CD14-positive monocyte (primary cell): ENCODE measurements at regions of chr9 and their contacts with region 1.

Region 1: DNA sequence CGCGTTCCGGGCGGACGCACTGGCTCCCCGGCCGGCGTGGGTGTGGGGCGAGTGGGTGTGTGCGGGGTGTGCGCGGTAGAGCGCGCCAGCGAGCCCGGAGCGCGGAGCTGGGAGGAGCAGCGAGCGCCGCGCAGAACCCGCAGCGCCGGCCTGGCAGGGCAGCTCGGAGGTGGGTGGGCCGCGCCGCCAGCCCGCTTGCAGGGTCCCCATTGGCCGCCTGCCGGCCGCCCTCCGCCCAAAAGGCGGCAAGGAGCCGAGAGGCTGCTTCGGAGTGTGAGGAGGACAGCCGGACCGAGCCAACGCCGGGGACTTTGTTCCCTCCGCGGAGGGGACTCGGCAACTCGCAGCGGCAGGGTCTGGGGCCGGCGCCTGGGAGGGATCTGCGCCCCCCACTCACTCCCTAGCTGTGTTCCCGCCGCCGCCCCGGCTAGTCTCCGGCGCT is at the start of gene DAPK1:
- DNase-seq: peak; percentile 65 to 75 (median 67)
- H3K4me3 ChIP-seq: peak within 1 kb of the TSS; percentile 73 to 91 (median 84)
- H3K4me3 Mint-ChIP-seq: peak within 1 kb of the TSS; percentile 97 to 100
- H3K27ac ChIP-seq: peak within 1 kb of the TSS; percentile 69 to 90
- H3K27ac Mint-ChIP-seq: peak within 1 kb of the TSS; percentile 90 to 96 (median 91)
- H3K4me1 ChIP-seq: peaks cover 59 to 75% of the 10 kb centered on the region in 2 donors
- H3K4me1 Mint-ChIP-seq: peaks cover 73% of the 10 kb centered on the region
- H3K27me3 ChIP-seq: no peaks in the 10 kb centered on the region
- H3K27me3 Mint-ChIP-seq: peaks cover 5 to 6% (median 6%) of the 10 kb centered on the region in 3 donors
- CTCF ChIP-seq: peak; percentile 17
- polyA plus RNA-seq, gene DAPK1: 24.1 to 102 (median 44.4) TPM

Region 2: DNA sequence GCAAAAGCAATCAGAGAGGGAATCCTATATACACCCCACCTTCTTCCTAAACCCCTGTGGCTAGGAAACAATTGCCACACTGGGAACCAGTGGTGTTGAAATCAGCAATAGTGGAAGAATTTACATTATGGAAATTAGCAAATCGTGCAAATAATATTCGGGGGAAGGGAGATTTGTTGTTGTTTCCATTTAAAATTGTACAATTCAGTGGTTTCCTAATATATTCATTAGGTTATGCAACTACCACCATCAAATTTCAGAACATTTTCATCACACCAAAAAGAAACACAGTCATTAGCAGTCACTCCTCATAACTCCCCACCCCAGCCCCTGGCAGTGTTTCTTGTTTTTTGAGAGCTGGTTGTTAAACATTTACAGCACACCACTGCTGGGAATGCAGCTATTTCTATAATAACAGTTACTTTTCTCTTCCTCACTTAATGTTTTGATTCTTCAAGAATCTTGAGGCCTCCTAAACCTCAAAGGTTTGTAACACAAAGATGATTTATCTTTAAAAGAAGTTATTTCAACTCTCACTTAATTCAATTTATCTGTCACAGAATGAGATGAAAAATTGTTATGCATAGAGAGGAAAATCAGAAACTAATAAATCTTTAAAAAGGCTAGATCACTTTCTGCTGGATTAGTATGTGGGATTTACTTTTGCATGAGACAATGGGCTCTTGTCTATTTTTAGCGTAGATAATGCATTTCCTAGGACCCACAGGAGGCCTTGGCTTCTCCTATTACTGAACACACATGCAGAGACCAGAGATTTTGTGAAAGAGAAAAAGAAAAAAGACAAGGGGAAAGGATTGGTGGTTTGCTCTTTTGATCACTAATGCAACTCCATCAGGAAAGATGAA is 91.7 kb before region 1 on chr9:
- intact Hi-C with region 1: loop called in 1 of 2 experiments (anchors 5 kb)
- DNase-seq: peak; percentile 77 to 91 (median 86)
- H3K4me3 ChIP-seq: peak overlapping the region in 1 of 3 experiments; percentile 35
- H3K4me3 Mint-ChIP-seq: peak overlapping the region in 1 of 2 donors; percentile 54
- H3K27ac ChIP-seq: peak overlapping the region; percentile 49 to 93
- H3K27ac Mint-ChIP-seq: peak overlapping the region; percentile 91 to 97 (median 94)
- H3K4me1 ChIP-seq: peaks cover 30 to 36% of the 10 kb centered on the region in 2 donors
- H3K4me1 Mint-ChIP-seq: peaks cover 40% of the 10 kb centered on the region
- H3K27me3 ChIP-seq: no peaks in the 10 kb centered on the region
- H3K27me3 Mint-ChIP-seq: peaks cover 1 to 3% (median 2%) of the 10 kb centered on the region in 3 donors
- CTCF ChIP-seq: no peak

Region 3: DNA sequence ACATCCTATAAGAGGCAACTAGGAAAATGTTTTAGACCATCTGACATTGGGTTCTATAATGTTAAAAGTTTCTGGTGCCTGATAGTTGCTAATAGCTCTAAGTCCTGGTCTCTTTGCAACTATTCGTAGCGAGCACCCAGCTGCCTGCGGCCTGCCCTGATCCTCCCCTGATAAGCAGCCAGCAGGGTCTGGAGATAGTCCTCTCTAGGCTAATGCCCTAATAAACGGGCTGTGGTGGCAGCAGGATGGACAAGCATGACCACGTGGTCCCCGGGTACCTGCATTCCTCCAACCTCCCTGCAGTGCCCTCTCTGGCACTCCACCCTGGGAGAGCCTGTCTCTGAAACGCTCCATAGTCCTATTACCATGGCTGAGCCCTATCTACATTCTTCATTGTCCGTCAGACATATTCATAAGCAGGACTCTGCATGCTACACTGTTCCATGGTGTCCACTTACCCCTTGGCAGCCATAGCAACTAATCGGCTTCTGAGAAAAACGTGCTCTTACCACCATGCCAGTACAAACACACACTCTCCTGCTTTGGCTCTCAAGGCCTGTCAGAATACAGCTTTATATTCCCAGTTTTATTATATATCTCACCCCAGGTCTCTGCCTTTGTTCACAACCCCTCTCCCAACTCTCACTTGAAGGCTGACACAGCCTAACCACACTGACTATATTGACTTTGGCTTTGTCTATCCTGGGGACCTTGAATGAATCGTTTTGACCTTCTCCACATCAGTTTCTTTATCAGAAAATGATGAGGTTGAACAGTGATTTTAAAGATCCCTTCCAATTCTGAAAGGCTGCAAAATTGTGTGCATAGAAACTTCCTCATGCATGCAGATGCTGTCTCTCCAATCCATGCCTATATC is 49.8 kb before region 1 on chr9:
- intact Hi-C with region 1: no loop called
- DNase-seq: no peak
- H3K4me3 ChIP-seq: no peak overlapping the region
- H3K4me3 Mint-ChIP-seq: no peak overlapping the region
- H3K27ac ChIP-seq: no peak overlapping the region
- H3K27ac Mint-ChIP-seq: no peak overlapping the region
- H3K4me1 ChIP-seq: peaks cover 6 to 9% of the 10 kb centered on the region in 2 donors
- H3K4me1 Mint-ChIP-seq: peaks cover 11% of the 10 kb centered on the region
- H3K27me3 ChIP-seq: no peaks in the 10 kb centered on the region
- H3K27me3 Mint-ChIP-seq: peaks cover 0 to 2% (median 0%) of the 10 kb centered on the region in 3 donors
- CTCF ChIP-seq: no peak

Region 4: DNA sequence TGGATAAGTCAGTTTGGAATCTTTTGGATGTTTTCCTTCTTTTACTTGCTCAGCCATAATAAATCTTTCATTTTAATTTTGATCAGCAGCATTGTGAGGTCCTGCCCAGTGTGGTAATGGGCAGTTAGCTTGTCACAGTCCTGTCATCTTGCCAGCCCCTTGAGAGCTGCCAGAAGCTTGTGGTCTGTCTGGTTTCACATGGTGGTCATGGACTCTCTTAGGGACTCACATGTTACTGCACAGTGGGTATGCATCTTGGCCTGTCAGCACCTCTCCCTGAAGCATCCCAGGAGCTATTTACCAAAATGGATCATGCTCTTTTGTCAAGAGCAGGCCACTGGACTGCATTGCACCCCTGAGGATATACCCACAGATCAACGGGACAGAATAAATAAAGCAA is 60.4 kb after region 1 on chr9:
- intact Hi-C with region 1: loop called (anchors 5 to 10 kb)
- DNase-seq: no peak
- H3K4me3 ChIP-seq: no peak overlapping the region
- H3K4me3 Mint-ChIP-seq: no peak overlapping the region
- H3K27ac ChIP-seq: no peak overlapping the region
- H3K27ac Mint-ChIP-seq: peak overlapping the region in 4 of 7 donors; percentile 52 to 96 (median 76)
- H3K4me1 ChIP-seq: peaks cover 50 to 58% of the 10 kb centered on the region in 2 donors
- H3K4me1 Mint-ChIP-seq: peaks cover 61% of the 10 kb centered on the region
- H3K27me3 ChIP-seq: no peaks in the 10 kb centered on the region
- H3K27me3 Mint-ChIP-seq: peaks cover 0 to 6% (median 0%) of the 10 kb centered on the region in 3 donors
- CTCF ChIP-seq: no peak

Region 5: GRCh38 chr9:87713278-87713987 is 215.8 kb after region 1 on chr9:
- intact Hi-C with region 1: loop called in 1 of 2 experiments (anchors 10 kb)
- DNase-seq: peak; percentile 99 to 100 (median 99)
- H3K4me3 ChIP-seq: peak overlapping the region in 2 of 3 experiments; percentile 15 to 23
- H3K4me3 Mint-ChIP-seq: peak overlapping the region in 1 of 2 donors; percentile 78
- H3K27ac ChIP-seq: peak overlapping the region; percentile 56 to 69
- H3K27ac Mint-ChIP-seq: peak overlapping the region; percentile 80 to 94 (median 90)
- H3K4me1 ChIP-seq: peaks cover 26 to 36% of the 10 kb centered on the region in 2 donors
- H3K4me1 Mint-ChIP-seq: peaks cover 52% of the 10 kb centered on the region
- H3K27me3 ChIP-seq: peaks cover 0 to 2% of the 10 kb centered on the region in 2 donors
- H3K27me3 Mint-ChIP-seq: peaks cover 4 to 7% (median 5%) of the 10 kb centered on the region in 3 donors
- CTCF ChIP-seq: no peak